ENCODE measurements at regions of chr12 and their contacts with region 1.

Region 1: DNA sequence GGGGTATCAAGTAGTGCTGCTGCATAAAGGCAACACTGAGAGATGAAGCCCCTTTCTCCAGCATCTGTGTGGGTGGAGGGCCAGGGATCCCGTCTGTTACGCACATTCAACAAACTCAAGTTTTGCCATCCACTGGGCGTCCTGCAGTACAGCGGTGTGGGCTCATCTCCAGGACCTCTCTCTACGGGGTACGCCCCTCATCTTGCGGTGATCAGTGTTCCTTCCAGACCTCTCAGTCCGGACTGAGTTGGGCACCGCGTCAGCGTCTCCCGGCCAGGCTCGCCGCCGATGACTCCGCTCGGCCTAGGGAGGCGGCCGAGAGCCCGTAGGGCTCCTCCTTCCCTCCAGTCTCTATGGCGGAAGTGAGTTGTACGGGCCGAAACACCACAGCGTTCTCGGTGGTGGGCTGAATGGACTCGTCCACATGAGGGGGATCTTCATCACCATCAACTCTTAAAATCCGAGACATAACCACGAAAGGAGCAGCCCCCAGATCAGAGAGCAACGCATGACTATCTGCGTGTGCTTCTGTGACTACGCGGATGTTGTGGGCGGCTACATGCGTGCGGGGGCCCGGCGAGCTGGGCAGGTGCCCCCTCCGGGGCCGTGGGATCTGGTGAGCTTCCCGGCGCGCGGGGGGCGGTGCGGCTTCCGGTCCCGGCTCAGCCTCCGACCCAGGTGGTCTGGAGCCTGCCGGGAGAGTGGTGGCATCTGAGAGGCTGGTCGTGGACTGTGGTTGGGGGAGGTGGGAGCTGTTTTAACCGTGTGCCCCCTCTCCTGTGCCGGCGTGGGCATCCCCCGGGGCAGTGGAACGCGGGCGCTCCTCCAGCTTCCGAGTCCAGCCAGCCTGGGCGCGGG is at the start of gene ATG101:
- DNase-seq: peak; percentile 88
- H3K4me3 Mint-ChIP-seq: peak within 1 kb of the TSS; percentile 98
- H3K27ac Mint-ChIP-seq: peak within 1 kb of the TSS; percentile 96
- H3K4me1 Mint-ChIP-seq: peaks cover 62% of the 10 kb centered on the region
- H3K27me3 Mint-ChIP-seq: peaks cover 7% of the 10 kb centered on the region
- total RNA-seq, gene ATG101: 30.5 to 30.8 TPM

Region 2: GRCh38 chr12:52050761-52051541 is 18.6 kb before region 1 on chr12 and contains the start of gene NR4A1:
- CTCF ChIA-PET with region 1: interaction called, 16 read pairs
- POLR2A ChIA-PET with region 1: interaction called, 28 read pairs
- DNase-seq: peak; percentile 98
- H3K4me3 Mint-ChIP-seq: peak within 1 kb of the TSS; percentile 85
- H3K27ac Mint-ChIP-seq: peak within 1 kb of the TSS; percentile 82
- H3K4me1 Mint-ChIP-seq: peaks cover 46% of the 10 kb centered on the region
- H3K27me3 Mint-ChIP-seq: peaks cover 6% of the 10 kb centered on the region
- total RNA-seq, gene NR4A1: 10.0 to 10.5 TPM

Region 3: DNA sequence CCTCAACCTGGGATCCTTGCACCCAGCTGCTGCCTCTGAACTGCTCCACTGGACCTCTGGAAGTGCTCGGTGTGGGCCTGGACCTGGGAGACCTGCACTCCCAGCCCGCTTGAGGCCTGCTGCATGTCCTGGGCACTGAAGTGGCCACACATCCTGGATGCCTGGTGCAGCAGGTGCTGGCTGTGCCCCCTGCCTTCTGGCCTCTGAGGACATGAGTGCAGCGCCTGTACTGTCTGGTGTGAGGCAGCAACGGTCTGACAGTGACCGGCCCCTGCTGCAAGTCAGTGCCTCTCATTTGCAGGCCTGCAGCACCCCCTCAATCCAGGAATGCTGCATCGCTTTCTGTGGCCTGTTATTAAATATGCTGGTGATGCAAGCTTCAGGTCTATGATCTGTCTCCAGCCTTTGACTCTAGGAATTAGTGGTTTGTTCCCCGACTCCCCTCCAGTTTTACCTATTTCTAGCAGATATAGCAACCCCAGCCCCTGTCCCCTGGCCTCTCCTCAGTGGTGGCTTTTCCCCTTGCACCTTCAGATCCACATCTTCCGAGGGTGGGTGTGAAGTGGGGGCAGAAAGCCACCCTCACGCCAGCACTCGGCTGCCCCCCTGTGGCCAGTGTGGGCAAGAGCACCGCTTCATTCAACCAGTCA is 13.6 kb after region 1 on chr12:
- CTCF ChIA-PET with region 1: interaction called, 19 read pairs
- POLR2A ChIA-PET with region 1: interaction called, 11 read pairs
- DNase-seq: peak; percentile 69
- H3K4me3 Mint-ChIP-seq: no peak overlapping the region
- H3K27ac Mint-ChIP-seq: no peak overlapping the region
- H3K4me1 Mint-ChIP-seq: peaks cover 10% of the 10 kb centered on the region
- H3K27me3 Mint-ChIP-seq: peaks cover 13% of the 10 kb centered on the region

Region 4: DNA sequence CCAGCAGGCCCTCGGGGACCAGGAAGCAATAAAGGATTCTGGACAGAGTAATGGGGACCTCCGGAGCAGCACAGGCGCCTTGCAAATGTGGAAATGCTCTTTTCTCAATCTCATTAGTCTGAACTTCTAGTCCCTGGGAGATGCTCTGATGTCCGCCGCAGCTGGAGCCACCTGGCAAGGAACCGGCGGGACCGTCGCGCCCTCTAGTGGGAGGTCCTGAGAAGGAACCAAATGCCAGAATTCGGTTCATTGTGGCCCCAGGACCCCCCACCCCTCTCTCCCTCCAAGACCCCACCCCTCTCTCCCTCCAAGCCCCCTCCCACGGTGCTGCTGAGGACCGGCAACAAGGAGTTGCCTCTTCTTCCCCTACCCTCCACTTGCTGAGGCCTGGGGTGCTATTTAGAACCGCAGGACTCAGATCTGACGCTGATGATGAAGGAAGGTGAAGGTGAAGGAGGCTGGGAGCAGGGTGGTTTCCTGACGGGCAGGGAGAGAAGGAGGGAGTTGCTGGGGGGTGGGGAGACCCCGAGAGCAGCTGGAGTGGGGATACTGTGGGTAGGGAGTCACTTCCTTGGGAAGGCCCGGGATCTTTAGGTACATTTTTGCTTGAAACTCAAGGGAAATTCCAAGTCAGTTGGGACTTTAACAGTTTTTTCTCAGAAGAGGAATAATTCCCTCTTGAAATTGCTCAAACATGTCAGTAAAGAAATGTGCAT is 52.4 kb after region 1 on chr12:
- CTCF ChIA-PET with region 1: interaction called, 11 read pairs
- POLR2A ChIA-PET with region 1: no interaction called
- DNase-seq: peak; percentile 71
- H3K4me3 Mint-ChIP-seq: no peak overlapping the region
- H3K27ac Mint-ChIP-seq: no peak overlapping the region
- H3K4me1 Mint-ChIP-seq: peaks cover 20% of the 10 kb centered on the region
- H3K27me3 Mint-ChIP-seq: peaks cover 15% of the 10 kb centered on the region